Dendritic cell treated with granulocyte-macrophage colony-stimulating factor and Interleukin-4, amounts not matched to agents 40 ng/mL and 50 ng/mL, for 4 days (primary cell): ENCODE measurements at regions of chr3 and their contacts with region 1.

Region 1: DNA sequence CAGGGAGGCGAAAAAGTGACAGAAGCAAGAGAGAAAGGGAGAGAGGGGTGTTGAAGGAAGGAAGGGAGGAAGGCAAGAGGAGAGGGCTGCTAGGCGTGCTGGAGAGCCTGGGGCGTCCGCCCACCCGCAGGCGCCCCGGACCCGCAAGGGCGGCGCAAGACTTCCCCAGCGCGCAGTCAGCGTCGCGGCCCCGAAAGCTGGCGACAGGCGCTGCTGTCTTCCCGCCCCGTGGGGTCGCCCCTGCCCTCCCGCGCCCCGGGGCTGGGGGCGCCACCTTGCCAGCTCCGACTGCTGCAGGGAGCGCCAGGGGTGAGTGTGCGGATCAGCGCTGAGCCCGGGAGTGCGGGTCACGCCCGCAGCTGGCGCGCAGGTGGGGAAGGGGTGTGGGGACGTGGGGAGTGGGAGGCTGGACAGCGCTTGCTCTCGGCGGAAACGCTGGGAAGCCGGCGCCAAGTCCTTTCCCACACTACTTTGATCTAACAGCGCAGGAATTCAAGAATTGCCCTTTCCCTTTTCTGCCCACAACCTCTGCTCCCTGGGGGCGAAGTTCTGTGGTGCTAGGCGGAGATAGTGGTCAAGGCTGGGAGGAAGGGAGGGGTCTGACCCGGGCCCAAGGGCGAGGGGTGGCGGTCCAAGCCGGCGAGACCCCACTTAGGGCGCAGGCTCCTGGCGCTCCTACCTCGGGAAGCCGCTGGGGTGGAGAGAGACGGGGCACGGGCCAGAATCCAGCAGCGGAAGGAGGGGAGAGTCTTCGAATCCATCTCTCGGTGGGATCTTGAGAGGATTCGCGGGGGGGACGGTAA is 266.1 kb downstream of the CGGBP1 start:
- H3K4me3 Mint-ChIP-seq: peak within 1 kb of the TSS; percentile 96
- H3K27ac Mint-ChIP-seq: peak within 1 kb of the TSS; percentile 72
- H3K4me1 Mint-ChIP-seq: peaks cover 31% of the 10 kb centered on the region
- H3K27me3 Mint-ChIP-seq: peaks cover 37% of the 10 kb centered on the region

Region 2: DNA sequence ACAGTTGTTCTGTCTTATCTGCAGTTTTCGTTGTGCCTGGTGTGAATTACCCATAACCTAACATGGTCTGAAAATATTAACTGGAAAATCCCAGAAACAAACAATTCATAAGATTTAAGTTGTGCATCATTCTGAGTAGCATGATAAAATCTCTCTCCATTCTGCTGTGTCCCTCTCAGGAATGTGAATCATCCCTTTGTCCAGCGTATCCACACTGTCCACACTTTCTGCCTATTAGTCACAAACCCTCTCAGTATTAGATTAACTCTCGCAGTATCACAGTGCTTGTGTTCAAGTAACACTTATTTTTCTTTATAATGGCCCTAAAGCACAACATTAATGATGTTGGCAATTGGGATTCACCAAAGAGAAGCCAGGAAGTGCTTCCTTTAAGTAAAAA is 62.9 kb after region 1 on chr3:
- intact Hi-C with region 1: loop called (anchors 5 kb)
- H3K4me3 Mint-ChIP-seq: no peak overlapping the region
- H3K27ac Mint-ChIP-seq: no peak overlapping the region
- H3K4me1 Mint-ChIP-seq: peaks cover 4% of the 10 kb centered on the region
- H3K27me3 Mint-ChIP-seq: no peaks in the 10 kb centered on the region

Region 3: DNA sequence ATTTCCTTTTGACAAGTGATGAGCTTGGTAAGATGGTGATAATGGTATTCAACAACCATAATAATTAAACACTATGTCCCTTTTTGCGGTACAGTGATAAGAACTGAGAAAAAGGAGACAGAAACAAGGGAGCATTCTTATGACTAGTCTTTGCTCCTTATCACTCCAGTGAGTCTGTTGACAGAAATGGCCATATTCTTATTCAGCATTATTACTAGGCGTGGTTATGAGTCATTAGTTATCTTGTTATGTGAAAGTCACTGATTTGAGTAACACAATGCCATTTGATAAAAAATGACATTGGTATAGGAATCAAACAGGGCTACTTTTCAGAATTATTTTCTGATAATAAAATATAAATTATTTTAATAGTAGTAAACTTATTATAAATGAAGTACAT is 550.5 kb after region 1 on chr3:
- intact Hi-C with region 1: no loop called
- H3K4me3 Mint-ChIP-seq: no peak overlapping the region
- H3K27ac Mint-ChIP-seq: no peak overlapping the region
- H3K4me1 Mint-ChIP-seq: no peaks in the 10 kb centered on the region
- H3K27me3 Mint-ChIP-seq: no peaks in the 10 kb centered on the region